MCF 10A (cell line): ENCODE measurements at regions of chr6 and their contacts with region 1.

Region 1: DNA sequence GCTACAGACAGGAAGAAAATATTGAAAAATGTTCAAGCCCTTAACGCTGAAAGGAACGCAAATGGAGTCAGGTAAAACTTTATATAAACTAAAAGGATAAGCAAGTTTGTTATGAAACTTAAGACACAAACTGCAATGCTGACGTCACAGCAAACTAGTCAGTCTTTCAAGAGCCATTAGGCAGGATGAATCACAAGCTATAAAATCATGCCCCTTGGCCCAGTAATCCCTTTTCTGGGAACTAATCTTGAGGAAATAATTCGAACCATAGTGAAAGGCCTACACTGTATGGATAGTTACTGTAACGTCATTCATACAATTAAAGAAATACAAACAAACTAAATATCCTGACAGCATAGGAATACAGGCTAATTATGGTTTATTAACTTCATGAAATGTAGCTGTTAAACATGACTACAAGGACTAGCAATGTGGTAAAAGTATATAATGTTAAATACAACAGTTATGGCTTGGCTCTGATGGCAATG is 42.7 kb upstream of the HINT3 start:
- DNase-seq: peak; percentile 97
- H3K4me3 Mint-ChIP-seq: no peak overlapping the region
- H3K27ac Mint-ChIP-seq: peak overlapping the region; percentile 94
- H3K4me1 Mint-ChIP-seq: peaks cover 46% of the 10 kb centered on the region
- H3K27me3 Mint-ChIP-seq: no peaks in the 10 kb centered on the region
- CTCF ChIP-seq: no peak

Region 2: DNA sequence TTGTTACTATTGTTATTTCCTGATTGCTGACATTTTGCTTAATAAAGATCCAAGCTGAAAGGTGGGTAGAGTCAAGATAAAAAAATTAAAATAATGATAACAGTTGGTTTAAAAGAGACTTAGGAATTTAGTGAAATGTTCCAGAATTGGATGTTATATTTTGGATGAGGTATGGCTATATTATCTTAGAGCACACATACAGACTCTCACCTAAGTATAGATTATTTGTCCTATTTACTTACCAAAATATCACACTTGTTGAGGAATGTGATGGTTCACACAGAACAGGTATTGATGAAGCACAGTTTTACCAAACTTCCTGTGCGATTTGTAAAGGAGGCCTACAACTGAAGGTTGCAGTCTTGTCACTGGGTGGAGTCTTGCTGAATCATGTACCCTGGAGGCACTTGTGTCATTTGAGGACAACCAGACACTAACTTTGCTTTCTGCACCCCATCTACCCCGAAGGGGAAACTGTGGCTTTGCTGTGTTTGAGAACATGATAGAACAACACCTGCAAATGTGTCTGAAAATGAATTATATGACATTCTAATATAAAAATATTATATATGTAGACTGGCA is 10.2 kb after region 1 on chr6:
- CTCF ChIA-PET with region 1: interaction called, 7 read pairs
- POLR2A ChIA-PET with region 1: interaction called, 24 read pairs
- intact Hi-C with region 1: no loop called
- DNase-seq: peak; percentile 73
- H3K4me3 Mint-ChIP-seq: peak overlapping the region; percentile 34
- H3K27ac Mint-ChIP-seq: peak overlapping the region; percentile 80
- H3K4me1 Mint-ChIP-seq: peaks cover 39% of the 10 kb centered on the region
- H3K27me3 Mint-ChIP-seq: no peaks in the 10 kb centered on the region
- CTCF ChIP-seq: no peak

Region 3: GRCh38 chr6:126388104-126388598 is 474.2 kb after region 1 on chr6:
- CTCF ChIA-PET with region 1: no interaction called
- POLR2A ChIA-PET with region 1: no interaction called
- intact Hi-C with region 1: no loop called
- DNase-seq: no peak
- H3K4me3 Mint-ChIP-seq: no peak overlapping the region
- H3K27ac Mint-ChIP-seq: no peak overlapping the region
- H3K4me1 Mint-ChIP-seq: no peaks in the 10 kb centered on the region
- H3K27me3 Mint-ChIP-seq: no peaks in the 10 kb centered on the region
- CTCF ChIP-seq: no peak

Region 4: GRCh38 chr6:126427713-126428112 is 513.8 kb after region 1 on chr6:
- CTCF ChIA-PET with region 1: no interaction called
- POLR2A ChIA-PET with region 1: no interaction called
- intact Hi-C with region 1: no loop called
- DNase-seq: no peak
- H3K4me3 Mint-ChIP-seq: no peak overlapping the region
- H3K27ac Mint-ChIP-seq: no peak overlapping the region
- H3K4me1 Mint-ChIP-seq: no peaks in the 10 kb centered on the region
- H3K27me3 Mint-ChIP-seq: no peaks in the 10 kb centered on the region
- CTCF ChIP-seq: no peak